CD4-positive, alpha-beta memory T cell (primary cell): ENCODE measurements at regions of chr2 and their contacts with region 1.

Region 1: GRCh38 chr2:138787053-138787666 is 7.0 kb upstream of the NXPH2 start:
- DNase-seq: peak in 3 of 5 donors; percentile 0 to 14 (median 5)
- H3K4me3 ChIP-seq: no peak overlapping the region
- H3K4me3 Mint-ChIP-seq: no peak overlapping the region
- H3K27ac ChIP-seq: no peak overlapping the region
- H3K27ac Mint-ChIP-seq: no peak overlapping the region
- H3K4me1 ChIP-seq: no peaks in the 10 kb centered on the region
- H3K4me1 Mint-ChIP-seq: no peaks in the 10 kb centered on the region
- H3K27me3 ChIP-seq: no peaks in the 10 kb centered on the region
- H3K27me3 Mint-ChIP-seq: peaks cover 5 to 7% of the 10 kb centered on the region in 2 donors

Region 2: GRCh38 chr2:137947728-137948336 is 839.3 kb before region 1 on chr2:
- CTCF ChIA-PET with region 1: no interaction called
- POLR2A ChIA-PET with region 1: no interaction called
- intact Hi-C with region 1: loop called (anchors 2 kb)
- DNase-seq: peak in 1 of 5 donors; percentile 14
- H3K4me3 ChIP-seq: no peak overlapping the region
- H3K4me3 Mint-ChIP-seq: no peak overlapping the region
- H3K27ac ChIP-seq: no peak overlapping the region
- H3K27ac Mint-ChIP-seq: no peak overlapping the region
- H3K4me1 ChIP-seq: no peaks in the 10 kb centered on the region
- H3K4me1 Mint-ChIP-seq: peaks cover 0 to 2% (median under 1%) of the 10 kb centered on the region in 4 donors
- H3K27me3 ChIP-seq: no peaks in the 10 kb centered on the region
- H3K27me3 Mint-ChIP-seq: no peaks in the 10 kb centered on the region

Region 3: GRCh38 chr2:138455275-138456052 is 331.7 kb before region 1 on chr2:
- CTCF ChIA-PET with region 1: no interaction called
- POLR2A ChIA-PET with region 1: no interaction called
- intact Hi-C with region 1: no loop called
- DNase-seq: no peak
- H3K4me3 ChIP-seq: no peak overlapping the region
- H3K4me3 Mint-ChIP-seq: no peak overlapping the region
- H3K27ac ChIP-seq: no peak overlapping the region
- H3K27ac Mint-ChIP-seq: no peak overlapping the region
- H3K4me1 ChIP-seq: no peaks in the 10 kb centered on the region
- H3K4me1 Mint-ChIP-seq: no peaks in the 10 kb centered on the region
- H3K27me3 ChIP-seq: no peaks in the 10 kb centered on the region
- H3K27me3 Mint-ChIP-seq: peaks cover 2 to 3% of the 10 kb centered on the region in 2 donors

Region 4: DNA sequence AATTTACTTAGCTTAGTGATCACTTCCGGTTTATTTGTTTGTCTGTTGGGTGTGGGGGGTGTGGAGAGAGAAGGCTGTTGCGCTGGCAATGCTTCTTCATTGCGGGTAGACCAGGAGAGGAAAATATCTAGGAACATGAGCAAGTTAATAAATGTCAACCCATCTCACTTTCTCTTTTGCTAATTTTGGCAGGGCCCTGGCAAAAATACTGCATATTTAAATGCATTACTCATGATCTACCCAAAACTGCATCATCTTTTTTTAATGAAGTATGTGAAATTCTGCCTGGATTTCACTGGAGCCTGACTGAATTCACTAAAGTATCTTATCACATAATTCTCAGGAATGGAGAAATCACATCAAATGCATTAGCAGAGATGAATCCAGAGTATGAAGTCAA is 1124.0 kb after region 1 on chr2:
- CTCF ChIA-PET with region 1: no interaction called
- POLR2A ChIA-PET with region 1: no interaction called
- intact Hi-C with region 1: no loop called
- DNase-seq: no peak
- H3K4me3 ChIP-seq: no peak overlapping the region
- H3K4me3 Mint-ChIP-seq: no peak overlapping the region
- H3K27ac ChIP-seq: no peak overlapping the region
- H3K27ac Mint-ChIP-seq: no peak overlapping the region
- H3K4me1 ChIP-seq: no peaks in the 10 kb centered on the region
- H3K4me1 Mint-ChIP-seq: no peaks in the 10 kb centered on the region
- H3K27me3 ChIP-seq: no peaks in the 10 kb centered on the region
- H3K27me3 Mint-ChIP-seq: no peaks in the 10 kb centered on the region